HEK293 (cell line): ENCODE measurements at regions of chr11 and their contacts with region 1.

Region 1: DNA sequence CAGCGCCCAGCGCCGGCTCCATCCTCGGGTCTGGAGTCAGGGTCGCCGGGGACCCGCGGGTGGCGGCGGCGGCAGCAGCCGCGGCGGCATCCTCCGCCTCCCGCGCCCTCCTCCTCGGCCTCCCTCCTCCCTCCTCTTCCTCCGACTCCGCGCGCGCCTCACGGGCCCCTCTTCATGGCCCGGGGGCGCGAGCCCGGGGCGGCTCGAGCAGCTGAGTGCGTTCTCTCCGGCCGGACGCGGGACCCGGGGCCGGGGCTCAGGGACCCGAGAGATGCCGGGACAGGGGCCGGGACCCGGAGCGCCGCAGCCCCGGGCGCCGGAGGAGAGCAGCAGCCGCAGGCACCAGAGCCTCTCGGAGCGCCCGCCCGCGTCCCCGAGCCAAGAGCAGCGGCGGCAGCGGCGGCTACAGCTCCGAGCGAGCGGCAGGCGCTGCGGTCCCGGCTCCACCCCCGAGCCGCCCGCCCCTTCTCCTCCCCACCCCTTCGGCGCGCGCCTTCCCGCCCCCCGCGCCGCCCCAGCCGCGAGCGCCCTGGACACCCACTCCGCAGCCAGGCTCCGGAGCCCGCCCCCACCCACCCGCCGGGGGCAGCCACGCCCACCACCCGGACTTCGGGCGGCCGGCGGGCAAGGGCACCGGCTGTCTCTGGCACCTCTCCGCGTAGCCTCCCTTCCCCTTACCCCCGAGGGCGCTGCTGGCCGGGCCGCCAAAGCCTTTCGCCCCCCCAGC is at the start of gene CHST1:
- H3K4me3 ChIP-seq: peak within 1 kb of the TSS; percentile 40
- H3K27ac ChIP-seq: no peak within 1 kb of the TSS; the same call in 1 of the 2 replicates
- H3K4me1 ChIP-seq: no peaks in the 10 kb centered on the region
- CTCF ChIP-seq: no peak

Region 2: DNA sequence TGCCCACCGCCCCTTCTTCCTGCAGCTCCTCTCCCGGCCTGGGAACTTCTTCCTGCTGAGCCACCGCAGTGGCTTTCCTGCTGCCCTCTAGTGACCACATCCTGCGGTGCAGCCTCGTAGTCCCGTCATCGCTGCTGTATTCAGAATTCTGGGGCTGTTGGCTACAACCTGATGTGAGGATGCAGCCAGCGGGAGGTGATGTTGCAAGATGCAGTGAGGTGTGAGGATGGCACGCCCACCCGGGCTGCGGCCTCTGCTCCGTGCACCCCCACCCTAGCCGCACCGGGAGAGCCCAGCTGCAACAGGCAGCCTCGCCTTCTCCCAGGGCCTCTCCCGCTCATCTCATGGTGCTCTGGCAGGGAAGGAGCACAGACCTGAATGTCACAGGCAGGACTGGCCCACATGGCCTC is 10.0 kb before region 1 on chr11:
- CTCF ChIA-PET with region 1: interaction called, 19 read pairs
- POLR2A ChIA-PET with region 1: no interaction called
- H3K4me3 ChIP-seq: no peak overlapping the region
- H3K27ac ChIP-seq: no peak overlapping the region
- H3K4me1 ChIP-seq: no peaks in the 10 kb centered on the region
- CTCF ChIP-seq: peak; percentile 88